BJ (cell line): ENCODE measurements at regions of chr12 and their contacts with region 1.

Region 1: GRCh38 chr12:6470375-6471163 is at the start of gene VAMP1:
- DNase-seq: peak; percentile 91
- H3K4me3 ChIP-seq: peak within 1 kb of the TSS; percentile 68
- H3K27me3 ChIP-seq: no peaks in the 10 kb centered on the region
- CTCF ChIP-seq: peak; percentile 2; the same call in 1 of the 2 replicates
- polyA plus RNA-seq, gene VAMP1: 12.5 and 23.3 TPM in 2 replicates

Region 2: DNA sequence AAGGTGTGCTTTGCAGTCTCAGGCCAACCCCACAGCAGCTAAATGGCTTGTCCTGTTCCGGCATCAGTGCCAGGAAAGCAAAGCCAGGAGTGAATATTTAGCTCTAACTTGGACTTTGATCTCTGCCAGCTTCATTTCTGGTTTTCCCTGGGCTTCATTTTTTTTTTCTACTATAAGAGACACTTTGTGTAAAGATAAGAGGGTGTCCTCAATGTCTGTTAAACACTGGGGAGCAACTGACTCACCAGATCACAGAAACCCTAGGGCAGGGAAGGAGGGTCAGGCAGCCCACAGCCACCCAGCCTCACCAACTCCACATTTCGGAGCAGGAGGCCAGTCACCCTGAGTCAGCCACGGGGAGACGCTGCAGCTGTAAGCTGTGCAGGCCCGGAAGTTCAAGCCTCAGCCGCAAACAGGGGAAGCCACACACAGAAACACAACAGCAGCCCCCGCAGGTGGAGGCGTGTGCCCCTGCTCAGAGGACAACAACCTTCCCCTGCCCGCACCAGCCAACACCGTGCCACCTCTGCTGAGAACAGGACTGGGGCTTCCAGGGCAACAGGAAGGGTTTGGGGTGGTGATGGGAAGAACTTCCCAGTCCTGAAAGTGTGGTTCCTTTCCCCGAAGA is 135.0 kb before region 1 on chr12:
- CTCF ChIA-PET with region 1: interaction called, 22 read pairs
- POLR2A ChIA-PET with region 1: interaction called, 14 read pairs
- DNase-seq: no peak
- H3K4me3 ChIP-seq: peak overlapping the region; percentile 36
- H3K27me3 ChIP-seq: no peaks in the 10 kb centered on the region
- CTCF ChIP-seq: peak; percentile 75

Region 3: DNA sequence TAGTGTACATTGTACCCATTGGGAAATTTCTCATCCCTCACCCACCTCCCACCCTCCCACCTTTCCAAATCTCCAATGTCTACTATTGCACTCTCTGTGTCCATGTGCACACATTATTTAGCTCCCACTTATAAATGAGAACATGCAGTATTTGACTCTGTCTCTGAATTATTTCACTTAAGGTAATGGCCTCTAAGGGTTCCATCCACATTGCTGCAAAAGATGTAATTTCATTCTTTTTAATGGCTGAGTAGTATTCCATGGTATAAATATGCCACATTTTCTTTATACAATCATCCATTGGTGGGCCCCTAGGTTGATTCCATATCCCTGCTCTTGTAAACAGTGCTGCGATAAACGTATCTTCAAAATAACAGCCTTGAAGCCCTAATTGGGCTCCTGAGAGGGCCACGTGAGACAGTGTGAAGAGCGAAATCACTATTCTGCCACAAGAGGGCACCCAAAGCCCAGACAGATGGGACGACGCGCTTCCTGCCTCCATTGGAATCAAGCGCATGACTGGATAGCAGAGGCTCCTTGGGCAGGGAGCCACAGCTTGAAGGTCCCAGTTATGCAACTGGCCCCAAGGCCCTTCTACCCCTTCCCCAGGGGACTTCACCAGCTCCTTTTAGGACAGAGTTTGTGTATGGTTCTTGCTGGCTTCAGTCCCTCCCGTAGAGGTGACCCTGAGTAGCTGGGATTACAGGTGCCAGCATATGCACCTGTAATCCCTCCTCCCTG is 47.1 kb before region 1 on chr12:
- CTCF ChIA-PET with region 1: interaction called, 62 read pairs
- POLR2A ChIA-PET with region 1: no interaction called
- DNase-seq: peak; percentile 60
- H3K4me3 ChIP-seq: no peak overlapping the region
- H3K27me3 ChIP-seq: no peaks in the 10 kb centered on the region
- CTCF ChIP-seq: peak; percentile 81

Region 4: GRCh38 chr12:6451348-6452244 is 19.0 kb before region 1 on chr12 and contains the start of gene TAPBPL:
- CTCF ChIA-PET with region 1: interaction called, 27 read pairs
- POLR2A ChIA-PET with region 1: interaction called, 3 read pairs
- DNase-seq: peak; percentile 70
- H3K4me3 ChIP-seq: peak within 1 kb of the TSS; percentile 44
- H3K27me3 ChIP-seq: no peaks in the 10 kb centered on the region
- CTCF ChIP-seq: no peak
- polyA plus RNA-seq, gene TAPBPL: 13.6 and 25.8 TPM in 2 replicates

Region 5: DNA sequence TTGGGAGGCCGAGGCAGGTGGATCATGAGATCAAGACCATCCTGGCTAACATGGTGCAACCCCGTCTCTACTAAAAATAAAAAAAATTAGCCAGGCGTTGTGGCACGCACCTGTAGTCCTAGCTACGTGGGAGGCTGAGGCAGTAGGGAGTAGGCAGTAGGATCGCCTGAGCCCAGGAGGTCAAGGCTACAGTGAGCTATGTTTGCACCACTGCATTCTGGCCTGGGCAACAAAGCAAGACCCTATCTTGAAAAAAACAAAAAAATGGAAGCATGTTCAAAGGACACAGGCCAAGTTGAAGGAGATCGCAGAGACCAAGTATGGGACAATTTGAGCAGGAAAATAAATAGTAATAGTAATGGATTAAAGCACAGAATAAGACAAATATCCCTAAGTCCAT is 37.5 kb after region 1 on chr12:
- CTCF ChIA-PET with region 1: no interaction called
- POLR2A ChIA-PET with region 1: no interaction called
- DNase-seq: no peak
- H3K4me3 ChIP-seq: no peak overlapping the region
- H3K27me3 ChIP-seq: no peaks in the 10 kb centered on the region
- CTCF ChIP-seq: no peak

Region 6: DNA sequence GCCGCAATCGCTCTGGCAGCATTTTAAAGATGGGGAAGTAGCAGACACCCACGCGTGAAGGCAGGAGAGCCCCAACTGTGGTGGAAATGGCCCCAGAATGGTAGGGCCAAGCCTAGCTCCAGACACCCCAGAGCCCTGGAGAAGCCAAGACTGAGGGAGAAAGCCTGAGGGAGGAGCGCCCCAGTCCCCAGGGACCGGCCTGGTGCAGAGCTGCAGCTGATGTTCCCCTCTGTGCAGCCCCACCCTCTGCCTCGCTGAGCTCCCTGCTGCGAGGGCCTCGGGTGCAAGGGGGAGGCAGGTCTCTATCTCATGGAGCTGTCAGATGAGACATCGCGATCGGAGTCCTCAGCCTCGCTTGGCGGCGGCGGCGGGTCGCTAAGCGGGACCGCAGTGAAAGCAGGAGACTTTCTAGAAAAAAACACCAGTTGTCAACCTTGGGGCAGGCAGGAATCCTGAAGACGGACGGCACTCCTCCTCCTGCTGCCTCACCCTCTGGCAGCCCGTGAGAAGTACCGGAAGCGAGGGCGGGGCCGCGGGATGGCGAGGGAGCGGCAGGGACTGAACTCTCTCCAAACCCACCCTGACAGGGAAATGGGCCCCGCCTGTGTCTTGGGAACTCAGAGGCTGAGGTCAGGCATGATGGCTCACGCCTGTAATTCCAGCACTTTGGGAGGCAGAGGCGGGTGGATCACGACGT is 69.8 kb after region 1 on chr12:
- CTCF ChIA-PET with region 1: interaction called, 17 read pairs
- POLR2A ChIA-PET with region 1: no interaction called
- DNase-seq: peak; percentile 87
- H3K4me3 ChIP-seq: peak overlapping the region; percentile 5; the same call in 1 of the 2 replicates
- H3K27me3 ChIP-seq: no peaks in the 10 kb centered on the region
- CTCF ChIP-seq: no peak